ENCODE measurements at regions of chr2 and their contacts with region 1.

Region 1: DNA sequence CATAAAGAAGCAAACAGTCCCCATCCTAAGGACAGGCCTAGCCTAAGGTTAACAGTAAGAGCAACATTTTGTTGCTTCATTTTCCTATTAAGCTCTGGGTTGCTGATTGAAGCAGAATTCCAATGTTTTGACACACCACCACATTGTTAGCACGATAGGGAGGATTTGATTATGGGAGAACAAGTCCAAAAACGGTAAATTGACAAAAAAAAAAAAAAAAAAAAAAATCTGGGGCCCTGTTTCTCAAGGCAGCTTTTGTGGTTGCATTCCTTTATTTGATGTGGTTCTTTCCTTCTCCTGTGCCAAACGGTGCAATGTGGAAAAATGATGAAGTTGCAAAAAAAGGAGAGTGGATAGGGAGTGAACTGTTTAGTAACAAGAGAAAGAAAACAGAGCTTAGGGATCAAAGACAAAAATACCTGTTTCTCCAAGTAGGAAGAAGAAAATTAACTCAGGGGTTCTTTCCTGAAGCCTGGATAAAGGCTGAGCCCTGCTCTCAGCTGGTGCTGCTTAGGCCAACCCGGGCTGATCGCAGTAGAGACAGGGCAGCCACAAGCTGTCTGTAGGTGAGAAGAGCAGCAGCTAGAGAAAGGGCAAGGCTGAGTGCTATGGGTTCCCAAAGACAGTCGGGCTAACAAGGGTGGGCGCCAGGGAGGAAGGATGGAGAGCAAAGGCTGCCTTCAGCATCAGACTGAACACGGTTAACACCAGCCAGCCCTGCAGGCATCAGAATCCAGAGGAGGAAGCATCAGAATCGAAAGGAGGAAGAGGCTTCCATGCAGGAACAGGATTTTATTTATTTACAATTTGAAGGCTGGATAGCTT is 167.8 kb upstream of the FOSL2 start:
- DNase-seq: peak; percentile 79
- H3K4me3 ChIP-seq: no peak overlapping the region
- H3K27ac ChIP-seq: peak overlapping the region; percentile 89
- H3K27me3 ChIP-seq: no peaks in the 10 kb centered on the region
- CTCF ChIP-seq: no peak

Region 2: GRCh38 chr2:27573452-27573851 is 651.4 kb before region 1 on chr2:
- CTCF ChIA-PET with region 1: no interaction called
- POLR2A ChIA-PET with region 1: interaction called, 11 read pairs
- DNase-seq: peak; percentile 93
- H3K4me3 ChIP-seq: no peak overlapping the region
- H3K27ac ChIP-seq: peak overlapping the region; percentile 25
- H3K27me3 ChIP-seq: no peaks in the 10 kb centered on the region
- CTCF ChIP-seq: no peak

Measured in AG04450 (cell line).